Ascending aorta (tissue), 2 donors: ENCODE measurements at regions of chr2 and their contacts with region 1.

Region 1: GRCh38 chr2:241355983-241356870 is at the start of gene FARP2:
- DNase-seq: peak; percentile 99 to 100
- H3K4me3 ChIP-seq: peak within 1 kb of the TSS; percentile 69 to 79
- H3K27ac ChIP-seq: peak within 1 kb of the TSS; percentile 90
- H3K4me1 ChIP-seq: peaks cover 8 to 31% of the 10 kb centered on the region in 2 donors
- H3K27me3 ChIP-seq: no peaks in the 10 kb centered on the region
- CTCF ChIP-seq: no peak
- total RNA-seq, gene FARP2: 19.6 TPM

Region 2: GRCh38 chr2:241271641-241272297 is 84.5 kb before region 1 on chr2:
- intact Hi-C with region 1: loop called (anchors 2 kb)
- DNase-seq: peak; percentile 70 to 93
- H3K4me3 ChIP-seq: peak overlapping the region; percentile 98 to 100
- H3K27ac ChIP-seq: peak overlapping the region; percentile 95 to 98
- H3K4me1 ChIP-seq: peaks cover 14 to 28% of the 10 kb centered on the region in 2 donors
- H3K27me3 ChIP-seq: no peaks in the 10 kb centered on the region
- CTCF ChIP-seq: no peak

Region 3: DNA sequence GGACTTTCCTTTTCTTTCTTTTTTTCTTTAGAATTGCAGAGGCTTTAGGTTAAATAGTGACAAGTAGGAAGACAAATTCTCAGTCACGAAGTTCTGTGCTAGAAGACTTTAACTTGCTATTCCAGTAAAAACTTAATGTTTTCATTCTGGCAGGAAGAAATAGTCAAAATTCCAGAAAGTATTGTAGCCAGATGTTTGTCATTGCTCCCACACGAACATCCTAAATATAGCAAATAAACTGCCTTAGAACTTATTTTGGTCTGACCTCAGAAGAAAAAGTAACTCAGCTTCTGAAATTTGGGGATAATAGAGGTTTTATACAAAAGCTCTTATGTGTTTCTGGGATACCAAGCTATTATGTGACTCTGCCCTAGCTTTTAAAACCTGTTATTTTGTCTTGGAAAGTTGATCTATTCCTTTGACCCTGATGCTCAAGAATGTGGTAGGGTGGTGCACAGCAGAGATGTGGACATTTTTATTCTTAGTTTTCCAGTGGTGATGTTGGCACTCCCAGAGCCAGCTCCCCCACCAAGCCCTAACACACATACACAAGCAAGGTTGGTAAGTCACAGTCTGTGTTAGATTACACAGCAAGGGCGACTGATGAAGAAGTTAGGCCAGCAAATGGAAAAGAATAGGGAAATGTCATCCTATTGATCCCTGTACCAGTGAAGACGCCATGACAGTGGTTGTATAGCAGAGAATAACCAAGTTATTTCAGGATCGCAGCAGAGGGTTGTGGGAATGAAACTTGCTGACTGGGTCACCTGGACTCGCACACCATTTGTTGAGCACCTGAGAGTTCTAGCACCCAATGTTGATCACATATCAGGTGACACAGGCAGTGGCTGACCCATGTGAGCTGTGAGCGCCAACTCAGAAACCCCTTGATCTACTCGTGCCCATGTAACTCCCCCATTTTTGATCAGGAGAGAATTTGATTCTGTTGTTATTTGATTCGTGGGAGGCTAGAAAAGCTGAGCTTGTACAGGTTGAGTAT is 23.6 kb after region 1 on chr2:
- intact Hi-C with region 1: loop called (anchors 1 kb)
- DNase-seq: no peak
- H3K4me3 ChIP-seq: no peak overlapping the region
- H3K27ac ChIP-seq: peak overlapping the region; percentile 81 to 84
- H3K4me1 ChIP-seq: peaks cover 23 to 52% of the 10 kb centered on the region in 2 donors
- H3K27me3 ChIP-seq: no peaks in the 10 kb centered on the region
- CTCF ChIP-seq: no peak

Region 4: DNA sequence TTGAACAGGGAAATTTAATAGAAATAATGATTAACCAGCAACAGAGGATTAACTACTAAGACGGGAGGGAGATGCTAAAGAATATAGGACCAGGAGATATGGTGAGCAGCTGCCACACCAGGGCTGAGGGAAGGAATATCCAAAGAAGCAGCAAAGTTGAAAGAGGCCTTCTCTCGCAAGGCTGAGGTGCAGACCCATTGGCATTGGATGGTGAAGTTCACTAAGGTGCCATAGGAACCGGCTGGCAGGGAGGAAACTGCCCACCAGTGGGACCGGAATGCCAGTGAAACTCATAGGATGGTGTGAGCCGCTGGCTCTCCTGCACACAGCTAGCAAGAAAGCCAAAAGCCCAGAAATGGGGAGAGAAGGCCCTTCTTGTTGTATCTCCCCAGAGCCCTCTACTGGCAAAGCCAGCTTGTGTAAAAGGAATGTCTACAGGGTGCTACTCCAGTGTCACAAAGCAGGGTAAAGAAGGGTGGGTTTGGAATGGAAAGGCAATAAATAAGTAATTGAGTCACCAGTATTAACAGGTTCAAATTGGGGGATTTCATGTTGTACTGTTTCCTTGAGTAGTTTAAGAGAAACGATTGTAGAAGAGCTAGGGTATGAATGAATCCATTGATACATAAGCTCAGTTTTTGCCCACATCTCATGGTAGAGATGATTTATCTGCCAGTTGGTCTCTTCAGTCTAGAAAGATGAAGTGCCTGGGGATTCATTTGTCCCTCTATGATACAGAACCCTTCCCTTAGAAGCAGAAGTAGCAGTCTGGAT is 35.9 kb after region 1 on chr2:
- intact Hi-C with region 1: loop called (anchors 1 kb)
- DNase-seq: no peak
- H3K4me3 ChIP-seq: no peak overlapping the region
- H3K27ac ChIP-seq: no peak overlapping the region
- H3K4me1 ChIP-seq: no peaks in the 10 kb centered on the region
- H3K27me3 ChIP-seq: no peaks in the 10 kb centered on the region
- CTCF ChIP-seq: peak; percentile 23 to 61 (median 44)

Region 5: DNA sequence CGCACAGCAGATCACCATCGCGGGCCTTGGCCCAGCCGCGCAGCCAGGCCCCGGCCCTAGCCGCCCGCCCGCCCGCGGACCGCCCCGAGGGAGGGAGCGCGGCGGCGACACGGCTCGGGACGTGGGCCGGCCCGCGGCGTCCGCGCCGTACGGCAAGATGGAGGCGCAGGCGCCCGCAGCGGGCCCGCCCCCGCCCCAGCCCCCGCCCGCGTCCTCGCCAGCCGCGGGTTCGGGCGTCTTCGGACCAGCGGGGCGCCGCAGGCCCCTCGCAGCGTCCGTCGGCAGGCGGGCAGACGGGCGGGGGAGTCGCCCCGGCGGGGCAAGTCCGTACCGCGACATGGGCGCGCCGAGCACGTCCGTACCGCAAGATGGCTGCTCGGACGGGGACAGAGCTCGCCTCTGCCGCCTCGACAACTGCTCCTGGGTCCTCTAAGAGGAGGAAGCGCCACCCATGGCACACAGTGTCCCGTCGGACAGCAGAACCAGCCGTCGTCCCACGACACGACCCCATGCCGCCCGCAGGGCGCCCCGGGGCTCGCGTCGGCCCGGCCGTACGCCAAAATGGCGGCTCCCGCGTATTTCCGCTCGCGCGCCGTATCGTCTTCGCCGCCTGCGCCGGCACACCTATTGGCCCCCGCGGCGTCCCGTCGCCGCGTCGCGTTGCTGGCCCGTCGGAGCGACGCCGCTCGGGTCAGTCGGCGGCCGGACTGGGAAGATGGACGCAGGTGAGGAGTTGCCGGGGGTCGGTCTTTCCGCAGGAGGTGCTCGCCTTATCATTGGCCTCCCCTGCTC is 281.0 kb after region 1 on chr2 and contains the starts of genes ATG4B and THAP4:
- intact Hi-C with region 1: loop called (anchors 1 kb)
- DNase-seq: peak; percentile 26 to 88
- H3K4me3 ChIP-seq: peak within 1 kb of the TSS; percentile 89 to 100
- H3K27ac ChIP-seq: peak within 1 kb of the TSS; percentile 99
- H3K4me1 ChIP-seq: peaks cover 17 to 29% of the 10 kb centered on the region in 2 donors
- H3K27me3 ChIP-seq: no peaks in the 10 kb centered on the region
- CTCF ChIP-seq: no peak
- total RNA-seq, gene ATG4B: 225 TPM
- total RNA-seq, gene THAP4: 80.8 TPM